ENCODE measurements at regions of chr6 and their contacts with region 1.

Region 1: DNA sequence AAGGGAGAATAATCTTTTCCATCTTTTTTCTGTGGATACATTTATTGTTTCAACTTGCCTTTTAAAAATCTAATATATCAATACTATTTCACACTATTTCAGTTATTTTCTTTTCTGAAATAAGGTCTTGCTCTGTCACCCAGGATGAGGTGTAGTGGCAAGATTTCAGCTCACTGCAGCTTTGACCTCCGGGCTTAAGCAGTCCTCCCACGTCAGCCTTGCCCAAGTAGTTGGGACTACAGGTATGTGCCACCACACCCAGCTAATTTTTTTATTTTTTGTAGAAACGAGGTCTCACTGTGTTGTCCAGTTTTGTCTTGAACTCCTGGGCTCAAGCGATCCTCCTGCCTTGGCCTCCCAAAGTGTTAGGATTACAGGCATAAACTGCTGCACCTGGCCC is 8.6 kb downstream of the KCTD20 start:
- DNase-seq: no peak
- H3K4me3 ChIP-seq: no peak overlapping the region
- H3K27ac ChIP-seq: no peak overlapping the region
- H3K4me1 ChIP-seq: no peaks in the 10 kb centered on the region
- H3K27me3 ChIP-seq: no peaks in the 10 kb centered on the region
- CTCF ChIP-seq: no peak
- POLR2A ChIP-seq: no peak

Region 2: DNA sequence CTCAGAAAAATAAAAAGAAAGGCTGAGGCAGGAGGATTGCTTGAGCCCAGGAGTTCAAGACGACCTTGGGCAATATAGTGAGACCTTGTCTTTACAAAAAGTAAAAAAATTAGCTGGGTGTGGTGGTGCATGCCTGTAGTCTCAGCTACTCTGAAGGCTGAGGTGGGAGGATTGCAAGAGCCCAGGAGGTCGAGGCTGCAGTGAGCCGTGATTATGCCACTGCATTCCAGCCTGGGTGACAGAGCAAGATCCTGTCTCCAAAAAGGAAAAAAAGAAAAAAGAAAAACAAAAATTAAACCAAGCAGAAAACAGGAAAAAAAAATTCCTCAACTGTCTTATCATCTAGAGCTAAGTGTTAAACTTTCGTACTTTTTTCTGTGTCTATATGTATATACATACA is 130.3 kb after region 1 on chr6:
- CTCF ChIA-PET with region 1: no interaction called
- POLR2A ChIA-PET with region 1: interaction called, 10 read pairs
- dilution Hi-C with region 1: no loop called
- intact Hi-C with region 1: no loop called
- DNase-seq: no peak
- H3K4me3 ChIP-seq: no peak overlapping the region
- H3K27ac ChIP-seq: no peak overlapping the region
- H3K4me1 ChIP-seq: no peaks in the 10 kb centered on the region
- H3K27me3 ChIP-seq: no peaks in the 10 kb centered on the region
- CTCF ChIP-seq: no peak
- POLR2A ChIP-seq: no peak